Activated CD4-positive, alpha-beta T cell treated with anti-CD3 and anti-CD28 coated beads for 36 hours (primary cell): ENCODE measurements at regions of chr9 and their contacts with region 1.

Region 1: DNA sequence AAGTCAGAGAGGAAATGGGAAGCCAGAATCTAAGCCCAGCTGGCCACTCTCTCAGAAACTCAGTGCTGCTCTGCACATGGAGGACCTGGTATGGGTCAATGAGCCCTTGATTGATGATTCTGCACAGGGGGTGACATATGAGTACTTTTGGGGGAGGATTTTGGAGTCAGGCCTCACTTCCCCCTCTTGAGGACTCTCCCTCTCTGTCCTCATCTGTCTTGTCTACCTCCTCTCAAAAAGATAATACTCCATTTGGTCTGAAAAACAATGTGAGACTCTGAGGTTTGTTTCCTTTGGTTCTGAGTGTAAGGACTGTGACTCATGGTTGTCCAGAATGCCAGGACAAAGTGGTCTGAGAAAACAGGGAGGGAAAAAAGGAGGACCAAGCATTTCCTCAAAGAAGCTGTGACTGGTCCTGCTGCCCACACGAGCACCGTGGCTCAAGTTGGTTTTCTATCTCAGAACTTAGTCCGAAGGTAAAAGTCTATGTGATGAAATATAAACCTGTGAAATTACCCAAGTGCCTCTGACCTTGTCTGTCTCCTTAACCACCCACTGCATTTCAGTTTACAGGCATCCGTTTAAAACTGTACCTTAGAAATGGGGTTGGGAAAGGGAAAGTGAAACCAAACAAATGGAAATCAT is 11.1 kb downstream of the TTC39B start:
- DNase-seq: peak; percentile 41
- ATAC-seq: peak; percentile 24
- H3K4me3 Mint-ChIP-seq: peak overlapping the region; percentile 64
- H3K27ac Mint-ChIP-seq: peak overlapping the region; percentile 94
- H3K4me1 Mint-ChIP-seq: peaks cover 83% of the 10 kb centered on the region
- H3K27me3 Mint-ChIP-seq: no peaks in the 10 kb centered on the region

Region 2: GRCh38 chr9:15205632-15206420 is 90.1 kb before region 1 on chr9:
- CTCF ChIA-PET with region 1: interaction called, 3 read pairs
- POLR2A ChIA-PET with region 1: interaction called, 3 read pairs
- intact Hi-C with region 1: loop called in 1 of 2 experiments (anchors 5 kb)
- DNase-seq: no peak
- ATAC-seq: no peak
- H3K4me3 Mint-ChIP-seq: no peak overlapping the region
- H3K27ac Mint-ChIP-seq: no peak overlapping the region
- H3K4me1 Mint-ChIP-seq: peaks cover 19% of the 10 kb centered on the region
- H3K27me3 Mint-ChIP-seq: no peaks in the 10 kb centered on the region

Region 3: DNA sequence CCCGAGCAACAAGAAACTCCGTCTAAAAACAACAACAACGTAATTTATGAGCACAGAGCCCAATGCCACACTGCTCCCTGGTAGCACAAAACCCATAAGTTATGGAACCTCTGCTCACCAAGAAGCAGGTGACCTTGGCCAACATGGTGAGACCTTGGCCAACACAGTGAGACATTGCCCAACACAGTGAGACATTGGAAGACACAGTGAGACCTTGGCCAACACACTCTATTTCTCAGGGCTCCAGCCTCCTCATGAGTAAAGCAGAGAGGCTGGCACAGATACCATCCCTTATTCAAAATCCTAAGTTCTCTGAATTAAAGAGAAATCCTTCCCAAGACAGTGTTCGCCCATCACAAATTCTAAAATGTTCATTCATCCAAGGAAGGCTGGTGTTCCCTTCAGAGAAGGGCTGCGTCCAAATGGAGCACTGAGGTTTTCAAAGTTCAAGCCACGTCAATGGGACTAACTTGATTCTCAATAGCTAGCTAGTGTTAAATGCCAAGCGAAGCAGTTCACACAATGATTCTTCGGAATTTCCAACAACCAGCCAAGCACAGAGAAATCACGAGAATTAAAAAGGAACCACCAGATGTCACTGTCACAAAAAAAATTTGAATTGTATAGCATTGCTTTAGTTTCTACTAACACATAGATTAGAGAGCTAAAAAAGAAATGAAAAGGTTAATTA is 18.3 kb before region 1 on chr9:
- CTCF ChIA-PET with region 1: interaction called, 4 read pairs
- POLR2A ChIA-PET with region 1: no interaction called
- intact Hi-C with region 1: loop called (anchors 2 kb)
- DNase-seq: no peak
- ATAC-seq: peak; percentile 76
- H3K4me3 Mint-ChIP-seq: no peak overlapping the region
- H3K27ac Mint-ChIP-seq: peak overlapping the region; percentile 29
- H3K4me1 Mint-ChIP-seq: peaks cover 33% of the 10 kb centered on the region
- H3K27me3 Mint-ChIP-seq: no peaks in the 10 kb centered on the region

Region 4: GRCh38 chr9:15422372-15423230 is 126.7 kb after region 1 on chr9 and contains the start of gene SNAPC3:
- CTCF ChIA-PET with region 1: no interaction called
- POLR2A ChIA-PET with region 1: no interaction called
- intact Hi-C with region 1: loop called (anchors 1 kb)
- DNase-seq: peak; percentile 96
- ATAC-seq: peak; percentile 97
- H3K4me3 Mint-ChIP-seq: peak within 1 kb of the TSS; percentile 95
- H3K27ac Mint-ChIP-seq: peak within 1 kb of the TSS; percentile 92
- H3K4me1 Mint-ChIP-seq: peaks cover 32% of the 10 kb centered on the region
- H3K27me3 Mint-ChIP-seq: no peaks in the 10 kb centered on the region
- total RNA-seq, gene SNAPC3: 37.8 to 39.6 TPM

Region 5: GRCh38 chr9:15529566-15530324 is 233.9 kb after region 1 on chr9:
- CTCF ChIA-PET with region 1: no interaction called
- POLR2A ChIA-PET with region 1: no interaction called
- intact Hi-C with region 1: loop called in 1 of 2 experiments (anchors 5 kb)
- DNase-seq: no peak
- ATAC-seq: no peak
- H3K4me3 Mint-ChIP-seq: no peak overlapping the region
- H3K27ac Mint-ChIP-seq: peak overlapping the region; percentile 19
- H3K4me1 Mint-ChIP-seq: peaks cover 16% of the 10 kb centered on the region
- H3K27me3 Mint-ChIP-seq: peaks cover under 1% of the 10 kb centered on the region